Common myeloid progenitor, CD34-positive (primary cell): ENCODE measurements at regions of chr11 and their contacts with region 1.

Region 1: DNA sequence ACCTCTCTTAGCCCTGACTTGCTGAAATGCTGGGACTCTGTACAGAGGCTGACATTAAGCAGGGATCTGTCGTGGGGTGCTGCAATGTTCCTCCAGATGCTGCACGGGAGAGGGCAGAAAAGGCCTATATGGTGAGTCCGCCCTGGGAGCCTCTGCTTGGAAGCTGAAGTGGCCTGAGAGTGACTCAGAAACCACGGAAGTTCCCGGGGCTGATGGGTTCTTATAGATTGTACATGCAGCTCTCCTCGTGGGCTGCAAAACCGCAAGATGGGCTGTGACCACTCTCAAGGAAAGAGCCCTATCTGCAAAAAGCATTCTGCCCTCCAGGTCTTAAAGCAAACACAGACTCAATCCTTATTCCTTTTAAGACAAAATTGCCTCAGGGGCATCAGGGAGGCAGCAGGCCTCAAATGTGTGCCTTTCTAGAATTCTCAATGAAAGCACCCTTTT is 5.8 kb upstream of the SLC43A3 start:
- DNase-seq: peak; percentile 91 to 97 (median 97)
- H3K4me3 ChIP-seq: peak overlapping the region in 3 of 7 experiments; percentile 5 to 37 (median 18)
- H3K27ac ChIP-seq: peak overlapping the region in 1 of 2 experiments; percentile 41
- H3K4me1 ChIP-seq: peaks cover 6 to 48% (median 19%) of the 10 kb centered on the region in 4 experiments
- H3K27me3 ChIP-seq: no peaks in the 10 kb centered on the region

Region 2: GRCh38 chr11:57444362-57445121 is 11.8 kb after region 1 on chr11:
- CTCF ChIA-PET with region 1: interaction called, 14 read pairs
- POLR2A ChIA-PET with region 1: no interaction called
- DNase-seq: peak in 2 of 3 donors; percentile 38 to 45
- H3K4me3 ChIP-seq: no peak overlapping the region
- H3K27ac ChIP-seq: no peak overlapping the region
- H3K4me1 ChIP-seq: no peaks in the 10 kb centered on the region
- H3K27me3 ChIP-seq: no peaks in the 10 kb centered on the region